Aorta (tissue), 5 donors: ENCODE measurements at regions of chr12 and their contacts with region 1.

Region 1: GRCh38 chr12:14570231-14570630 is 2.5 kb upstream of the PLBD1 start:
- DNase-seq: no peak
- ATAC-seq: no peak
- H3K4me3 ChIP-seq: no peak overlapping the region
- H3K27ac ChIP-seq: no peak overlapping the region
- H3K4me1 ChIP-seq: no peaks in the 10 kb centered on the region
- H3K27me3 ChIP-seq: no peaks in the 10 kb centered on the region

Region 2: DNA sequence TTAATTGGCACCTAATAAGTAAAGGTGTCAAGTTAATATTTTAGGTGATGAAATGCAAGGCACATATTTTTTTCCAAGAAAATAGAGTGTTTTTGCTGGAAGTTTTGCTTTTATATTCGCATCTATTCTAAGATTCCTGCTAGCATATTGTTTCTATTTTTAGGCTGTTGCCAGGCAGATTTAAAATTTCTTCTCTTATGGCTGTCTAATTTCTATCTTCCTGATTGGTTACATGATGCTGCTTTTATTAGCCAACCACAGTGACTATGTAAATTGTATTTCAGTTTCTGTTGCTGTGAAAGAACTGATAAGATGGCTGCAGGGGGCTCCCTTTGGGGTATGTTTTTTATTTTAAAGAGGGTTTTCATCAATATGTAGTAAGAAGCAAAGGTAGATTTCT is 162.0 kb before region 1 on chr12:
- intact Hi-C with region 1: no loop called
- DNase-seq: no peak
- ATAC-seq: no peak
- H3K4me3 ChIP-seq: peak overlapping the region in 1 of 2 donors; percentile 26
- H3K27ac ChIP-seq: no peak overlapping the region
- H3K4me1 ChIP-seq: no peaks in the 10 kb centered on the region
- H3K27me3 ChIP-seq: no peaks in the 10 kb centered on the region

Region 3: DNA sequence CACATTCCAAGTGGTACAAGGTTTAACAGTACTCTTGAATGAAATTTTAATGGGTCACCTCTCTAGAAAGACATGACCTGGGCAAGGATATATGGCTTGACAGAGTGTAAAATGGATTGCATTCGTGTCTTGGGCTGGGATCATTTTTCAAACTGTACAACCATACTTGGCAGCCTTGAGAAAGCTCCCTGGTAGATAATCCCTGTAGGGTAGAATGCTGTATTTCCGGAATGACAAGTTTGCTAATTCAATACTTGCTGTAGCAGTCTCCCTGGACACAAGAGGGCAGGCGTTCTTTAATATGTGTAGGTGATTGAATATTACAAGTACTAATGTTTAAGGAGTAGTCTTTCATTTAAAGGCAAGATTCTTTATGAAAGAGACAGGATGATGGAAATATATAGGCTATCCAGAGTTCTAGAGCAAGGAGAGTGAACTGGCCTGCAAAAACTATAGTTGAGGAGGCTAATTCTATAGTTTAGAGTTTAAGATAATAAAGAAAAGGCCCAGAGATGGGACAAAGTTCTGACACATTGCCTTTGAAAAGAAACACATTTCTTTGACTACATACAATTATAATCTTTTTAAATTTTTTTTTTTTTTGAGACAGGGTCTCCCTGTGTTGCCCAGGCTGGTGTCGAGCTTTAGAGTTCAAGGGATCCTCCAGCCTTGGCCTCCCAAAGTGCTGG is 55.9 kb before region 1 on chr12:
- intact Hi-C with region 1: loop called in 1 of 2 experiments (anchors 2 kb)
- DNase-seq: no peak
- ATAC-seq: no peak
- H3K4me3 ChIP-seq: no peak overlapping the region
- H3K27ac ChIP-seq: no peak overlapping the region
- H3K4me1 ChIP-seq: no peaks in the 10 kb centered on the region
- H3K27me3 ChIP-seq: no peaks in the 10 kb centered on the region

Region 4: GRCh38 chr12:14650789-14651188 is 80.6 kb after region 1 on chr12:
- intact Hi-C with region 1: no loop called
- DNase-seq: no peak
- ATAC-seq: peak; percentile 75
- H3K4me3 ChIP-seq: no peak overlapping the region
- H3K27ac ChIP-seq: no peak overlapping the region
- H3K4me1 ChIP-seq: no peaks in the 10 kb centered on the region
- H3K27me3 ChIP-seq: no peaks in the 10 kb centered on the region